MCF 10A (cell line): ENCODE measurements at regions of chr15 and their contacts with region 1.

Region 1: DNA sequence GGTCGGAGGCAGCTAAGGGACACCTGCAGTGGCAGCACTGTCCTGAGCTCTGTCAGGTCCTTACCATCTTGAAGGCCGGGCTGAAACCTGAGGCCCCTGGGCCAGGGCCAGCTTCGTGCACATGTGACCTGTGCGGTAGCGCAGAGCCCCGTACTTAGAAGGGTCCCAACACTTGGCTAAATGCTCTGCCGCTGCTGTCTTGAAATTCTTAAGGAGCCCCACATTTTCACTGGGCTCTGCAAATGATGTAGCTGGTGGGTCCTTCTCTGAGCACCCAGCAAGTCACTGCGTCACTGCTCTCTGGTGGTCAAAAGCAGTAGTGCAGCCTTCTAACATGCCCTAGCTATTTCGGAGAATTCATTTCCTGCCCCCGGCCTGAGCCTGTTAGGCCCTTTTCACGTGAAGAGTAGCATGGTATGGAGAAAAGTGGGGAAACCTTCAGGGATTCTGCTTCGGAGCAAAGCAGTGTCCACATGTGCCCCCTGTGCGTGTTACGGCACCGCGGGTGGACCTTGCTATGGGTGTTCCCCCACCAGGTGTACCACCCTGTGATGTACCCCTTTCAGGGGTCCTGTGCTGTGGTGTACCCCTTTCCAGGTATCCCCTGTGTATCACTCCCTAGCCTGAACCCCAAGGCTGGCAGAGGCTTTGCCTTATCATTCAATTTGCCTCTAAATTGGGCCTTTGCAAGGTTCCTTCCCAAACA is 79.7 kb downstream of the TMEM266 start:
- DNase-seq: peak; percentile 79
- H3K4me3 Mint-ChIP-seq: no peak overlapping the region
- H3K27ac Mint-ChIP-seq: no peak overlapping the region
- H3K4me1 Mint-ChIP-seq: no peaks in the 10 kb centered on the region
- H3K27me3 Mint-ChIP-seq: peaks cover 21% of the 10 kb centered on the region
- CTCF ChIP-seq: peak; percentile 86

Region 2: GRCh38 chr15:75597667-75598341 is 541.7 kb before region 1 on chr15:
- CTCF ChIA-PET with region 1: no interaction called
- POLR2A ChIA-PET with region 1: no interaction called
- intact Hi-C with region 1: no loop called
- DNase-seq: peak; percentile 14
- H3K4me3 Mint-ChIP-seq: no peak overlapping the region
- H3K27ac Mint-ChIP-seq: no peak overlapping the region
- H3K4me1 Mint-ChIP-seq: no peaks in the 10 kb centered on the region
- H3K27me3 Mint-ChIP-seq: no peaks in the 10 kb centered on the region
- CTCF ChIP-seq: peak; percentile 29

Region 3: DNA sequence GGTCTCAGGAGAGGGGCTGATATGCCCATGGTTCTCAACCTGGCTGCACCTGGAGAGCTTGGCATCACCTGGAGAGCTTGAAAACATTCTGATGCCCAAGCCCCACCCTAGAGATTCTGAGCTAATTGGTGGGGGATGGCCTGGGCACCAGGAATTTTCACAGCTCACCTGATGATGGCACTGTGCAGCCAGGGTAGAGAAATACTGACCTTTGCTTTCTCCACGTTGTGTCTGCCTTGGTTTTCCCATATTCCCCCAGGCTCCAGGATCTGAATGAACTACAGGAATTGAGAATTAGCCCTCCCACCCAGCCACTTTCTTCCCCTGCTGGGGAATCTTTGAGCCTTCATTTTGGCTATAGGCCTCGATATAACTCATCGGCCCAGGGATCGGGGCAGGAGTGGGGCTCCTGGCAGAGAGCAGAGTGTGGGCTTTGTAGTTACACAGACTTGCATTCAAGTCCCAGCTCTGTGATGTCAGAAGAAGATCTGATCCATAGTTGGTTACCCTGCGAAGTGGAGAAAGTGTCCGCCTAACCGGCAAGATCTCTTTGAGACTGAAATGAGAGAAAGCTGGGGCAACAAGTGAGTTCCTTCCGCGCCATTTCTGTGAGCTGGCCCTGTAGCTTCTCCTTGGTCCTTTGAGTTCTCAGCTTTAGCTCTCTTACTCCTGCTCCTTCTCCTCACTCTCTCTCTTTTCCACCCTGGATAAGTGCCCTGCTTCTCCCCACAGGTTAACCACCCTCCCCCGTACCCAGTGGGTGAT is 329.4 kb before region 1 on chr15:
- CTCF ChIA-PET with region 1: interaction called, 43 read pairs
- POLR2A ChIA-PET with region 1: interaction called, 4 read pairs
- intact Hi-C with region 1: loop called (anchors 1 kb)
- DNase-seq: peak; percentile 72
- H3K4me3 Mint-ChIP-seq: no peak overlapping the region
- H3K27ac Mint-ChIP-seq: no peak overlapping the region
- H3K4me1 Mint-ChIP-seq: no peaks in the 10 kb centered on the region
- H3K27me3 Mint-ChIP-seq: no peaks in the 10 kb centered on the region
- CTCF ChIP-seq: peak; percentile 73

Region 4: GRCh38 chr15:75947092-75947491 is 192.4 kb before region 1 on chr15:
- CTCF ChIA-PET with region 1: interaction called, 11 read pairs
- POLR2A ChIA-PET with region 1: interaction called, 3 read pairs
- intact Hi-C with region 1: no loop called
- DNase-seq: peak; percentile 77
- H3K4me3 Mint-ChIP-seq: no peak overlapping the region
- H3K27ac Mint-ChIP-seq: no peak overlapping the region
- H3K4me1 Mint-ChIP-seq: peaks cover 14% of the 10 kb centered on the region
- H3K27me3 Mint-ChIP-seq: no peaks in the 10 kb centered on the region
- CTCF ChIP-seq: no peak

Region 5: DNA sequence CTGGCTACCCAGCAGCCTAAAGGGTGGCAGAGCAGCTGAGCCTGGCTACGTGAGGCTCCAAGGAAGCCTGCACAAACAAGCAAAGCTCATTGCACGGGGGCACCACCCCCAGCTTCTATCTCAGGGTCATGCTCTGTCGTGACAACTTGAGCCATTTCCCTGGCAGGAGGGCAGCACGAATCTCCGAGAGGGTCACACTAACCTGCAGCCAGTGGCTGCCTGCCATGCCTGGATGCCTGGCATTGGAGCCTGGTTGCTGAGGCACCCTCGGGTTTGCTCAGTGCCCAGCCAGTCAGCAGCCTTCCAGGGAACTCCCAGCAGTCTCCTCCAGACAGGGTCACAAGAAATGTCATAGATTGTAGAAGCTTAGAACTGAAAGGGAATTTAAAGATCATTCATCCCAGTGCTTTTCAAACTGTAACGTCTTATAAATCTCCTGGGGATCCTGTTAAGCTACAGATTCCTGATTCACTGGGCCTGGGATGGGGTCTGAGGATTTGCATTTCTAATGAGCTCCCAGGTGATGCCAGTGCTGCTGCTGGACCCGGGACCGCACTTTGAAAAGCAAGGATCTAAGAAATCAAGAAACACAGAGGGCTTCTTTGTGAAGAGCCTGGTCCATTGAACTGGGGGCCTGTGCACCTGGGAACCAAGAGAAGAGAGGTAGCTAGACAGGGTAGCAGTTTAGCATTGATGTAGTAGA is 31.3 kb before region 1 on chr15:
- CTCF ChIA-PET with region 1: interaction called, 11 read pairs
- POLR2A ChIA-PET with region 1: interaction called, 3 read pairs
- intact Hi-C with region 1: no loop called
- DNase-seq: no peak
- H3K4me3 Mint-ChIP-seq: no peak overlapping the region
- H3K27ac Mint-ChIP-seq: no peak overlapping the region
- H3K4me1 Mint-ChIP-seq: no peaks in the 10 kb centered on the region
- H3K27me3 Mint-ChIP-seq: no peaks in the 10 kb centered on the region
- CTCF ChIP-seq: no peak

Region 6: DNA sequence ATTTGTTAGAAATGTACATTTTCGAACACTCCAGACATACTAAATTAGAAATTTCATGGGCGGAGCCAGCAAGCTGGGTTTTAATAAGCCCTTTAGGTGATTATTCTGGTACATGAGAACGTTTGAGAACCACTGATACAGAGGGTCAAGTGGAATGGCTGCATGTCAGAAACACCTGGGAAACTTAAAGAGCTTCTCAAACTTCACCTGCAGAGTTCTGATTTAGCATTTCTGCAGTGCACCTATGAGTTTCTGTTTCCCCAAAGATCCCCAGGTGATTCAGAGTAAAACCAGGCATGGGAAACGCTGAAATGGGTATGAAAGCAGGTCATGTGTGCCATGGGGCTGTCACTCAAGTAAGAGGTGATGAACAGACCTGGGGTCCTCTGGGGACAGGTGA is 11.6 kb before region 1 on chr15:
- CTCF ChIA-PET with region 1: interaction called, 19 read pairs
- POLR2A ChIA-PET with region 1: interaction called, 3 read pairs
- intact Hi-C with region 1: no loop called
- DNase-seq: no peak
- H3K4me3 Mint-ChIP-seq: no peak overlapping the region
- H3K27ac Mint-ChIP-seq: no peak overlapping the region
- H3K4me1 Mint-ChIP-seq: no peaks in the 10 kb centered on the region
- H3K27me3 Mint-ChIP-seq: peaks cover 15% of the 10 kb centered on the region
- CTCF ChIP-seq: no peak

Region 7: GRCh38 chr15:76163475-76163881 is 24.0 kb after region 1 on chr15:
- CTCF ChIA-PET with region 1: interaction called, 10 read pairs
- POLR2A ChIA-PET with region 1: interaction called, 3 read pairs
- intact Hi-C with region 1: no loop called
- DNase-seq: peak; percentile 91
- H3K4me3 Mint-ChIP-seq: no peak overlapping the region
- H3K27ac Mint-ChIP-seq: peak overlapping the region; percentile 27
- H3K4me1 Mint-ChIP-seq: peaks cover 9% of the 10 kb centered on the region
- H3K27me3 Mint-ChIP-seq: no peaks in the 10 kb centered on the region
- CTCF ChIP-seq: no peak